AG04450 (cell line): ENCODE measurements at regions of chr10 and their contacts with region 1.

Region 1: DNA sequence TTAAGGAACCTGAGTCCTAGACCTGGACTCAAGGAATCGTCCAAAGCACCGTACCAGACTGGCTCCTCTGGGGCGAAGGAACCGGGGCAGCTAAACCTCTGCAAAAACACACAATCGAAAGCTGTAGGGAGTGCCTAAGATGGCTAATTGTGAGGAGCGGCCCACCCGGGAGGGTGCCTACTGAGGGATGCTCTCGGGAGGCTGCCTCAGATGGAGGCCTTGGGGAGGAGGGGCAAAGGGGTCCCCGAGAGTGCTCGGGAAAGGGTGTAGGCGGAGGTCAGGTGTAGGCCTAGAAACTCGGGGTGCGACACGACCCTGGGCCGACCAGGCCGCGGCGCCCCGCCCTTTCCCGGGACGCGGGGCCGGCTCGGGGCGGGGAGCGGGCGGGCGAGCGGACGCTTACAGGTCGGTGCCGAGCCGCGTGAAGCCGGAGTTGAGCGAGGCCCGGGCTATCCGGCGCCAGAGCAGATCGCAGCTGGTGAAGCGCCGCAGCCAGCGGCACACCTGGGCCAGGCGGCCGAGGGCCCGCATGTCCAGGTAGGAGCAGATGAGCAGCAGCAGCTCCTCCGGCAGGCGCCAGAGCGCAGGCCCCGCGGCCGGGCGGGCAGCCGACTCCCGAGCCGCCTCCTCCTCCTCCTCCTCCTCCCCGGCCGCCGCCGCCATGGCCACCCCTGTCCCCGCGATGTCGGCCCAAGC is 844 bp downstream of the FBXW4 start:
- DNase-seq: no peak
- H3K4me3 ChIP-seq: peak overlapping the region; percentile 83
- H3K27ac ChIP-seq: peak overlapping the region; percentile 93
- H3K27me3 ChIP-seq: no peaks in the 10 kb centered on the region
- CTCF ChIP-seq: no peak

Region 2: GRCh38 chr10:101704331-101704730 is 10.2 kb after region 1 on chr10:
- CTCF ChIA-PET with region 1: interaction called, 3 read pairs
- POLR2A ChIA-PET with region 1: interaction called, 11 read pairs
- DNase-seq: no peak
- H3K4me3 ChIP-seq: no peak overlapping the region
- H3K27ac ChIP-seq: no peak overlapping the region
- H3K27me3 ChIP-seq: no peaks in the 10 kb centered on the region
- CTCF ChIP-seq: no peak